ENCODE measurements at regions of chr7 and their contacts with region 1.

Region 1: DNA sequence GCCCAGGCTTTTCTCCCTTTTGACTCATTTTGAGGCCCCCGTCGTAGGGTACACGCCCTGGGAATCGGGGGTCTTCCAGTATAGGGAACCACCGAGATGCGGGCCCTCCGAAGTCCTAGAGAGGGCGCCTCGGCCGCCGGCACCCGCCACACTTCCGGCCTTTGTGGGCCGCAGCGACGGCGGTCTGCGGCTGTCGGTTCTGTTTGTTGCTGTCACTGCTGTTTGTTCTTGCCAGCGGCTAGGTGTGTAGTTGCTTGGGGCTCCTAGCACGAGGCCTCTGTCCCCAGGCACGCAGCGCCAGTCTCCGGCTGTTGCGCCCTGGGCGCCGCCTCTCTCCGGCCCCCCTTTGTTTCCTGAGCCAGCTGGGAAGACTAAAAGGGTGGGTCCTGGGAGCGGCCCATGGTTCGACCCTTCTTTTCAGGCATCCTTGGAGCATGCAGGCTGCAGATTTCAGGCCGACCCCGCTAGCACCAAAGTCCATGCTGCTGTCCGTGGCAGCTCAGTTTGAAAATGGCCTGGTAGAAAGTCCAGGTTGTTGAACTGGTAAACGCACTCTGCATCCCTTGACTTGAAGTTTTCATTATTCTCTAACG is 17.8 kb upstream of the ZKSCAN1 start:
- DNase-seq: peak; percentile 81
- H3K4me3 Mint-ChIP-seq: peak overlapping the region; percentile 66
- H3K27ac Mint-ChIP-seq: peak overlapping the region; percentile 87
- H3K4me1 Mint-ChIP-seq: peaks cover 29% of the 10 kb centered on the region
- H3K27me3 Mint-ChIP-seq: peaks cover 39% of the 10 kb centered on the region

Region 2: DNA sequence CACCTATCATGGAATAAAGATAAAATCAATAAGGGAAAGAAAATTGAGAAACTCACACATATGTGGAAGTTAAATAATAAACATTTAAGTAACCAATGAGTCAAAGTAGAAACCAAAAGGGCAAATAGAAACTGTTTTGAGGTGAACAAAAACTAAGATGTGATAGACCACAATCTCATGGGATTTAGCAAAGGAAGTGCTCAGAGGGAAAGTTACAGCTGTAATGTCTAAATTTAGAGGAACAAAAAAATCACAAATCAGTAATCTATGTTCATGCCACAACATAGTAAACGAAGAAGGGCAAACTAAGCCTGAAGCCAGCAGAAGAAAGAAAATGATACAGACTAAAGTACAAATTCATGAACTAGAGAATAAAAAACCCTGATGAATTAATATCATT is 230.0 kb before region 1 on chr7:
- CTCF ChIA-PET with region 1: no interaction called
- DNase-seq: no peak
- H3K4me3 Mint-ChIP-seq: no peak overlapping the region
- H3K27ac Mint-ChIP-seq: no peak overlapping the region
- H3K4me1 Mint-ChIP-seq: peaks cover 8% of the 10 kb centered on the region
- H3K27me3 Mint-ChIP-seq: no peaks in the 10 kb centered on the region

Region 3: GRCh38 chr7:99943641-99944496 is 53.8 kb before region 1 on chr7:
- CTCF ChIA-PET with region 1: no interaction called
- DNase-seq: no peak
- H3K4me3 Mint-ChIP-seq: no peak overlapping the region
- H3K27ac Mint-ChIP-seq: no peak overlapping the region
- H3K4me1 Mint-ChIP-seq: peaks cover 8% of the 10 kb centered on the region
- H3K27me3 Mint-ChIP-seq: peaks cover 34% of the 10 kb centered on the region

Region 4: GRCh38 chr7:100015232-100016209 is 17.9 kb after region 1 on chr7 and contains the start of gene ZKSCAN1:
- CTCF ChIA-PET with region 1: interaction called, 10 read pairs
- DNase-seq: peak; percentile 89
- H3K4me3 Mint-ChIP-seq: peak within 1 kb of the TSS; percentile 96
- H3K27ac Mint-ChIP-seq: peak within 1 kb of the TSS; percentile 98
- H3K4me1 Mint-ChIP-seq: peaks cover 48% of the 10 kb centered on the region
- H3K27me3 Mint-ChIP-seq: peaks cover 4% of the 10 kb centered on the region

Region 5: GRCh38 chr7:100081535-100082102 is 84.0 kb after region 1 on chr7 and contains the start of gene ZNF3:
- CTCF ChIA-PET with region 1: interaction called, 11 read pairs
- DNase-seq: peak; percentile 98
- H3K4me3 Mint-ChIP-seq: peak within 1 kb of the TSS; percentile 83
- H3K27ac Mint-ChIP-seq: peak within 1 kb of the TSS; percentile 90
- H3K4me1 Mint-ChIP-seq: peaks cover 32% of the 10 kb centered on the region
- H3K27me3 Mint-ChIP-seq: peaks cover 29% of the 10 kb centered on the region